Naive thymus-derived CD4-positive, alpha-beta T cell (primary cell): ENCODE measurements at regions of chr17 and their contacts with region 1.

Region 1: DNA sequence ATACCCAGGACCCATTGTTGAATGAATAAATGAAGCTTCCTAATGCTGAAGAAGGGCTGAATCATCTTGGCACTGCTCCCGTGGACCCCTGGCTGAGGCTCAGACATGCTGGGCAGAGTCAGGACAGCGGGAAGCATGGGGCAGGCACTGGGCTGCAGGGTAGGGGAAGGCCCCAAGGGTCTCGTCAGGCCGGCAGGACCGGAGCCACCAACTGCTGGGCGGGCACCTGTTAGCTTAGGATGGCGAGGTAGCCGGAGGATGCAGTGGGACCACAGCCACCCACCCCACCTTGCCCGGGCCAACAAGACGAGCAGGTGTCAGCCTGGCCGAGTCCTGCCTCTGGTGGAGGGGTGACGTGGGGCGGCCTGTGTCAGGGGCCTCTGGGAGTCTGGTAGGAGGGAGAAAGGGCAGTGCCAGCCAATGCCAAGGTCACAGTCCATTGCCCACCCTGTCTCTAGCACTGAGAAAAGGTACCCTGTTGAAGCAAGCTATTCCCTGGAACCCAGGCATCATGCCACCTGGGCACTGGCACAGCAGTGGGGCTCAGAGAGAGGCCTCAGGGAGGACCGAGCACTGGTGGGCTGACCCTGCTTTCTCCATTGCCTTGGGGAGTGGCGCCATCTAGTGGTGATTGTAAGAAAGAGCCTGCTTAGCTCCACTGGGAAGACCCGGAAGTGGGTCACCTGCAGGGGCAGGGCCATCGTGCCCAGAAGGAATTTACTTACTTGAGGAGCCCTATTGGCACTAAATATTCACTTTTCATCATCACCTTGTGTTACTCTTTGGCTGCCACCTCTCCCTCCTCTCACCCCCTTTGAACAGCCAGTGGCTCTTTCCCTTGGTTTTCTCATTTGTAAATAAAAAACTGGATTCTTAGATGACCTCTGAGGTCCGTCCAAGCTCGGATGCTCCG is 3.0 kb upstream of the DLX3 start:
- DNase-seq: peak; percentile 69 to 90 (median 81)
- ATAC-seq: peak; percentile 89
- H3K4me3 ChIP-seq: no peak overlapping the region
- H3K4me3 Mint-ChIP-seq: peak overlapping the region in 2 of 10 donors; percentile 33 to 71
- H3K27ac ChIP-seq: no peak overlapping the region
- H3K27ac Mint-ChIP-seq: no peak overlapping the region
- H3K4me1 ChIP-seq: peaks cover 11 to 30% of the 10 kb centered on the region in 2 donors
- H3K4me1 Mint-ChIP-seq: peaks cover 12 to 40% (median 28%) of the 10 kb centered on the region in 7 donors
- H3K27me3 ChIP-seq: peaks cover 19 to 35% of the 10 kb centered on the region in 2 donors
- H3K27me3 Mint-ChIP-seq: peaks cover 73 to 79% (median 76%) of the 10 kb centered on the region in 5 donors

Region 2: GRCh38 chr17:49861150-49861892 is 136.7 kb before region 1 on chr17:
- CTCF ChIA-PET with region 1: interaction called, 88 read pairs
- POLR2A ChIA-PET with region 1: interaction called, 4 read pairs
- intact Hi-C with region 1: loop called (anchors 1 kb)
- DNase-seq: peak in 8 of 9 donors; percentile 19 to 60 (median 42)
- ATAC-seq: peak; percentile 76
- H3K4me3 ChIP-seq: no peak overlapping the region
- H3K4me3 Mint-ChIP-seq: no peak overlapping the region
- H3K27ac ChIP-seq: no peak overlapping the region
- H3K27ac Mint-ChIP-seq: peak overlapping the region in 1 of 9 donors; percentile 4
- H3K4me1 ChIP-seq: no peaks in the 10 kb centered on the region
- H3K4me1 Mint-ChIP-seq: peaks cover 0 to 7% (median 5%) of the 10 kb centered on the region in 7 donors
- H3K27me3 ChIP-seq: no peaks in the 10 kb centered on the region
- H3K27me3 Mint-ChIP-seq: peaks cover 0 to 13% (median 6%) of the 10 kb centered on the region in 5 donors

Region 3: GRCh38 chr17:49886021-49886420 is 112.0 kb before region 1 on chr17:
- CTCF ChIA-PET with region 1: interaction called, 35 read pairs
- POLR2A ChIA-PET with region 1: no interaction called
- intact Hi-C with region 1: no loop called
- DNase-seq: no peak
- ATAC-seq: no peak
- H3K4me3 ChIP-seq: no peak overlapping the region
- H3K4me3 Mint-ChIP-seq: no peak overlapping the region
- H3K27ac ChIP-seq: no peak overlapping the region
- H3K27ac Mint-ChIP-seq: no peak overlapping the region
- H3K4me1 ChIP-seq: no peaks in the 10 kb centered on the region
- H3K4me1 Mint-ChIP-seq: peaks cover 0 to 2% (median 0%) of the 10 kb centered on the region in 7 donors
- H3K27me3 ChIP-seq: peaks cover 0 to 8% of the 10 kb centered on the region in 2 donors
- H3K27me3 Mint-ChIP-seq: peaks cover 21 to 58% (median 37%) of the 10 kb centered on the region in 5 donors

Region 4: GRCh38 chr17:49968380-49969133 is 29.5 kb before region 1 on chr17:
- CTCF ChIA-PET with region 1: interaction called, 5 read pairs
- POLR2A ChIA-PET with region 1: interaction called, 7 read pairs
- intact Hi-C with region 1: loop called (anchors 1 to 2 kb)
- DNase-seq: peak; percentile 46 to 77 (median 71)
- ATAC-seq: peak; percentile 83
- H3K4me3 ChIP-seq: peak overlapping the region; percentile 81
- H3K4me3 Mint-ChIP-seq: peak overlapping the region; percentile 82 to 94 (median 90)
- H3K27ac ChIP-seq: no peak overlapping the region
- H3K27ac Mint-ChIP-seq: peak overlapping the region in 7 of 9 donors; percentile 47 to 91 (median 65)
- H3K4me1 ChIP-seq: peaks cover 9 to 40% of the 10 kb centered on the region in 2 donors
- H3K4me1 Mint-ChIP-seq: peaks cover 25 to 79% (median 57%) of the 10 kb centered on the region in 7 donors
- H3K27me3 ChIP-seq: peaks cover 11 to 41% of the 10 kb centered on the region in 2 donors
- H3K27me3 Mint-ChIP-seq: peaks cover 63 to 93% (median 72%) of the 10 kb centered on the region in 5 donors

Region 5: GRCh38 chr17:49987681-49988441 is 10.2 kb before region 1 on chr17:
- CTCF ChIA-PET with region 1: interaction called, 14 read pairs
- POLR2A ChIA-PET with region 1: no interaction called
- intact Hi-C with region 1: no loop called
- DNase-seq: no peak
- ATAC-seq: no peak
- H3K4me3 ChIP-seq: no peak overlapping the region
- H3K4me3 Mint-ChIP-seq: no peak overlapping the region
- H3K27ac ChIP-seq: no peak overlapping the region
- H3K27ac Mint-ChIP-seq: no peak overlapping the region
- H3K4me1 ChIP-seq: no peaks in the 10 kb centered on the region
- H3K4me1 Mint-ChIP-seq: peaks cover 0 to 4% (median 1%) of the 10 kb centered on the region in 7 donors
- H3K27me3 ChIP-seq: peaks cover 5 to 9% of the 10 kb centered on the region in 2 donors
- H3K27me3 Mint-ChIP-seq: peaks cover 42 to 75% (median 55%) of the 10 kb centered on the region in 5 donors

Region 6: GRCh38 chr17:50114849-50115357 is 116.9 kb after region 1 on chr17:
- CTCF ChIA-PET with region 1: no interaction called
- POLR2A ChIA-PET with region 1: no interaction called
- intact Hi-C with region 1: no loop called
- DNase-seq: peak in 6 of 9 donors; percentile 35 to 47 (median 41)
- ATAC-seq: peak; percentile 48
- H3K4me3 ChIP-seq: no peak overlapping the region
- H3K4me3 Mint-ChIP-seq: peak overlapping the region in 2 of 10 donors; percentile 5 to 32
- H3K27ac ChIP-seq: no peak overlapping the region
- H3K27ac Mint-ChIP-seq: peak overlapping the region in 2 of 9 donors; percentile 61 to 68
- H3K4me1 ChIP-seq: peaks cover 0 to 4% of the 10 kb centered on the region in 2 donors
- H3K4me1 Mint-ChIP-seq: peaks cover 7 to 18% (median 12%) of the 10 kb centered on the region in 7 donors
- H3K27me3 ChIP-seq: peaks cover 4 to 9% of the 10 kb centered on the region in 2 donors
- H3K27me3 Mint-ChIP-seq: peaks cover 14 to 44% (median 26%) of the 10 kb centered on the region in 5 donors